ENCODE measurements at regions of chr6 and their contacts with region 1.

Region 1: DNA sequence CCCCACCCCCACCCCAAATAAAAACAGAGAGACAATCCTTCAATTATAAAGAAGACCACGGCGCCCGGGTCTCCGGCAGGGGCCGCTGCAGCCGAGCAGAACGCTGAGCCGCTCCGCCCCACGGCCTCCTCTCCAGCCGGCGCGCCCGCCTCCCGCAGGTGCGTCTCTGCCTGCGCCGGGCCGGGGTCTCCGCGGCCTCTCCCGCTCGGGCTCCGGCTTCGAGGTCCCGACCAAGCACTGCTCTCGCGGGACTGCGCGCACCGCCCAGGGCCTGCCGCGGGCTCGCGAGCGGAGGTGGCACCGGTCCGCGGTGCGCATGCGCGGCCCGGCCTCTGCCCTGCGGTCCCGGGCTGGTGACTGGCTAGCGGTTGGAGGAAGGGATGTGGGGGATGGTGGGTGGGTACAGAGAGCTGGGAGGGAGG is 241 bp upstream of the SIRT5 start:
- DNase-seq: peak; percentile 93
- H3K4me3 Mint-ChIP-seq: peak overlapping the region; percentile 99
- H3K27ac Mint-ChIP-seq: peak overlapping the region; percentile 98
- H3K4me1 Mint-ChIP-seq: peaks cover 33% of the 10 kb centered on the region
- H3K27me3 Mint-ChIP-seq: peaks cover 17% of the 10 kb centered on the region

Region 2: GRCh38 chr6:13328076-13328874 is 245.9 kb before region 1 on chr6 and contains the start of gene TBC1D7:
- CTCF ChIA-PET with region 1: interaction called, 19 read pairs
- DNase-seq: peak; percentile 95
- H3K4me3 Mint-ChIP-seq: peak within 1 kb of the TSS; percentile 95
- H3K27ac Mint-ChIP-seq: peak within 1 kb of the TSS; percentile 93
- H3K4me1 Mint-ChIP-seq: peaks cover 30% of the 10 kb centered on the region
- H3K27me3 Mint-ChIP-seq: no peaks in the 10 kb centered on the region

Region 3: DNA sequence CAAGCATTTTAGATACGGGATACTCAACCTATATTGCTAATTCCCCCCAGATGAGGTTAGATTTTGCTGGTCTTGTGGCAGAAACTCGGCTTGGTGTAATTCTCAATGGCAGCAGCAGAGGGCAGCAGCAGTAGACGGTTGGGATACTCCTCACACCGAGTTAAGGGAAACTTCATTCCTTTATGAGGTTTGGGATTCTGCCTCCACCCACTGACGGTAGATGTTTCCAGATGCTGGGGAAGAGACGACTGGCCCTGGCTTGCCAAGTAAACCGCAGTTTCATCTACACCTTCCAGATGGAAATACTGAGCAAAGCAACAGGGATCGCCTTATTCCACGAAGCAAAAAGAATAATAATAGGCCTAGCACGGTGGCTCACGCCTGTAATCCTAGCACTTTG is 237.6 kb before region 1 on chr6:
- CTCF ChIA-PET with region 1: interaction called, 22 read pairs
- DNase-seq: peak; percentile 78
- H3K4me3 Mint-ChIP-seq: no peak overlapping the region
- H3K27ac Mint-ChIP-seq: no peak overlapping the region
- H3K4me1 Mint-ChIP-seq: peaks cover 31% of the 10 kb centered on the region
- H3K27me3 Mint-ChIP-seq: peaks cover 10% of the 10 kb centered on the region

Region 4: GRCh38 chr6:13561624-13562267 is 12.4 kb before region 1 on chr6:
- CTCF ChIA-PET with region 1: interaction called, 20 read pairs
- DNase-seq: no peak
- H3K4me3 Mint-ChIP-seq: no peak overlapping the region
- H3K27ac Mint-ChIP-seq: no peak overlapping the region
- H3K4me1 Mint-ChIP-seq: no peaks in the 10 kb centered on the region
- H3K27me3 Mint-ChIP-seq: peaks cover 33% of the 10 kb centered on the region

Region 5: GRCh38 chr6:13614926-13615798 is 41.0 kb after region 1 on chr6 and contains the start of gene NOL7:
- CTCF ChIA-PET with region 1: interaction called, 18 read pairs
- DNase-seq: peak; percentile 99
- H3K4me3 Mint-ChIP-seq: peak within 1 kb of the TSS; percentile 93
- H3K27ac Mint-ChIP-seq: peak within 1 kb of the TSS; percentile 94
- H3K4me1 Mint-ChIP-seq: peaks cover 57% of the 10 kb centered on the region
- H3K27me3 Mint-ChIP-seq: peaks cover 5% of the 10 kb centered on the region

Measured in activated naive CD4-positive, alpha-beta T cell treated with anti-CD3 and anti-CD28 coated beads, Interleukin-2, amount 10 ng/mL, durations not matched to agents 7 days and 5 days (primary cell).